ENCODE measurements at regions of chr16 and their contacts with region 1.

Region 1: DNA sequence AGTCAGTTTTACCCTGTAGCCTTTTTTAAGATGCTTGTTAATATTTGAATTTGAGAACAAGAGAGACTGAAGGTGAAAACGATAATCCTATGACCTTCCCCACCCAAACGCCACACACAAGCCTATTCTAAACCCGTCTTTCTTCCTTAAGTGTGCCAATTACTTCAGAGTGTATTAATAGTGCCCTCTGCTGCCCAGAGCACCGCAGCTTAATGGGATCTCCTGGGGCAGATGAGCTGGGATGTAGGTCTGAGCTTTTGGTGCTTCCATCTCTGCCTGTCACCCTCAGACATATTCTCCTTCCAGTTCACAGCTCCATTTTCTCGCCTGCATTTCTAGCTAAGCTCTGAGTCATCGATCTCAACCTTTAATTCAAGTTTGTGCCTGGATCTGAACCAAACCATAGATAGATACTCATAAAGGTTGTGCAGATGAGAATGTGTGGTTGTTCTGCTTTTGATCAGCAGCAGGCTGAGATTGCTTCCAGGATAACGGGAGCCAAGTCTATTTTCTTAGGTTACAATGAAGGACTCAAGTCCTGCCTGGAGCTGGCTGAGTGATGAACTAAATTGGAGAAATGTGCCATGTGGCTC is 46.4 kb upstream of the CDH13 start:
- DNase-seq: peak in 8 of 10 donors; percentile 39 to 74 (median 58)
- H3K4me3 ChIP-seq: no peak overlapping the region
- H3K27ac ChIP-seq: peak overlapping the region in 1 of 59 donors; percentile 38
- H3K27me3 ChIP-seq: no peaks in the 10 kb centered on the region
- CTCF ChIP-seq: peak; percentile 10 to 84 (median 65)

Region 2: GRCh38 chr16:82263521-82264143 is 316.8 kb before region 1 on chr16:
- intact Hi-C with region 1: loop called (anchors 5 kb)
- DNase-seq: peak; percentile 45 to 81 (median 66)
- H3K4me3 ChIP-seq: peak overlapping the region in 8 of 59 donors; percentile 1 to 20 (median 11)
- H3K27ac ChIP-seq: peak overlapping the region in 4 of 59 donors; percentile 9 to 34 (median 20)
- H3K27me3 ChIP-seq: peaks cover 0 to 3% (median 0%) of the 10 kb centered on the region in 45 donors
- CTCF ChIP-seq: peak; percentile 81 to 100 (median 97)

Region 3: GRCh38 chr16:82358568-82359221 is 221.7 kb before region 1 on chr16:
- intact Hi-C with region 1: loop called in 1 of 2 experiments (anchors 5 kb)
- DNase-seq: no peak
- H3K4me3 ChIP-seq: no peak overlapping the region
- H3K27ac ChIP-seq: no peak overlapping the region
- H3K27me3 ChIP-seq: no peaks in the 10 kb centered on the region
- CTCF ChIP-seq: no peak

Region 4: GRCh38 chr16:82366462-82366861 is 213.9 kb before region 1 on chr16:
- intact Hi-C with region 1: loop called in 1 of 2 experiments (anchors 2 kb)
- DNase-seq: no peak
- H3K4me3 ChIP-seq: no peak overlapping the region
- H3K27ac ChIP-seq: no peak overlapping the region
- H3K27me3 ChIP-seq: no peaks in the 10 kb centered on the region
- CTCF ChIP-seq: no peak

Region 5: GRCh38 chr16:82456683-82457082 is 123.7 kb before region 1 on chr16:
- intact Hi-C with region 1: loop called in 1 of 2 experiments (anchors 5 kb)
- DNase-seq: peak in 7 of 10 donors; percentile 24 to 62 (median 51)
- H3K4me3 ChIP-seq: no peak overlapping the region
- H3K27ac ChIP-seq: no peak overlapping the region
- H3K27me3 ChIP-seq: peaks cover 0 to 4% (median 0%) of the 10 kb centered on the region in 45 donors
- CTCF ChIP-seq: peak; percentile 40 to 87 (median 73)

Region 6: DNA sequence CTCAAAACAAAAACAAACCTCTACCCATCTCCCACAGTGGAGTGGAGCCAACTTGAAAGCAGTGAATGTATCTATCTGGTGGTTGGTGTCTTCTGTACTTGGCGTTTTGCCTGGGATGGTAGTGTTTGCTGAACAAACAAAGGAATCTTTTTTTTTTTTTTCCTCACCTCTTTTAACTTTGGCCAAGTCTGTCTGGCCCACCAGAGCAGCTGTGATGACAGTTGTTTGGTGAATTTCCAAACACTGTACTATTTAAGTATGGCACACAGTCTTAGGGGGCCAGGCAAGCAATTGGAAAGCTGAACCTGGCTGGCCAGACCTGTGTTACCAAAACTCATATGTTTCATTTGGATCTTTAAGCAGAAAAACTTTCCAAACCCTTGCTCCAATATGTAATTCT is 55.4 kb before region 1 on chr16:
- intact Hi-C with region 1: loop called in 1 of 2 experiments (anchors 5 kb)
- DNase-seq: no peak
- H3K4me3 ChIP-seq: no peak overlapping the region
- H3K27ac ChIP-seq: no peak overlapping the region
- H3K27me3 ChIP-seq: no peaks in the 10 kb centered on the region
- CTCF ChIP-seq: no peak